CD4-positive, alpha-beta memory T cell (primary cell): ENCODE measurements at regions of chr2 and their contacts with region 1.

Region 1: GRCh38 chr2:147843864-147844696 is 749 bp upstream of the ACVR2A start:
- DNase-seq: peak; percentile 87 to 91 (median 88)
- H3K4me3 ChIP-seq: peak overlapping the region; percentile 49 to 74
- H3K4me3 Mint-ChIP-seq: peak overlapping the region; percentile 93 to 99 (median 97)
- H3K27ac ChIP-seq: peak overlapping the region; percentile 51
- H3K27ac Mint-ChIP-seq: peak overlapping the region; percentile 78 to 99 (median 87)
- H3K4me1 ChIP-seq: peaks cover 38% of the 10 kb centered on the region
- H3K4me1 Mint-ChIP-seq: peaks cover 23 to 50% (median 36%) of the 10 kb centered on the region in 4 donors
- H3K27me3 ChIP-seq: no peaks in the 10 kb centered on the region
- H3K27me3 Mint-ChIP-seq: peaks cover 3 to 5% of the 10 kb centered on the region in 2 donors

Region 2: GRCh38 chr2:147297820-147298219 is 546.3 kb before region 1 on chr2:
- CTCF ChIA-PET with region 1: no interaction called
- POLR2A ChIA-PET with region 1: interaction called, 15 read pairs
- intact Hi-C with region 1: loop called (anchors 2 kb)
- DNase-seq: peak; percentile 60 to 67 (median 64)
- H3K4me3 ChIP-seq: no peak overlapping the region
- H3K4me3 Mint-ChIP-seq: peak overlapping the region in 7 of 8 donors; percentile 27 to 79 (median 64)
- H3K27ac ChIP-seq: peak overlapping the region; percentile 25
- H3K27ac Mint-ChIP-seq: peak overlapping the region; percentile 79 to 97 (median 89)
- H3K4me1 ChIP-seq: peaks cover 72% of the 10 kb centered on the region
- H3K4me1 Mint-ChIP-seq: peaks cover 56 to 83% (median 65%) of the 10 kb centered on the region in 4 donors
- H3K27me3 ChIP-seq: no peaks in the 10 kb centered on the region
- H3K27me3 Mint-ChIP-seq: no peaks in the 10 kb centered on the region

Region 3: DNA sequence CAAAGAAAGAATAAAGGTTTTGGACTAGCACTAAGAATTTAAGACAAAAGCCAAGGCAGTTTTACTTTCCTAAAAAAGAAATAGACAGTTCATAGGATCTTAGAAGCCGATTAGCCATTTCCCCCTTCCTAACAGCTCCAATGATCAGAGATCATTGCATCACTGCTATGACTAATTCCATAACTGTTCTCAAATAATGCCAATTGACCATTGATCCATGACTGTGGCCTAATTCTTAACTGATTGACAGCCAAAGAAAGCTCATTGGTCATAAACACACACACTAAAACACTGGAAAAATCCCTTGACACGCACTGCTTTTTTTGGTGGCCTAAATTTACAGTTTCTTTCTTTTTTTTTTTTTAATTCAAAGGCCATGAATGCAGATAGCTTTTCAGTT is 344.3 kb before region 1 on chr2:
- CTCF ChIA-PET with region 1: no interaction called
- POLR2A ChIA-PET with region 1: no interaction called
- intact Hi-C with region 1: loop called (anchors 10 kb)
- DNase-seq: no peak
- H3K4me3 ChIP-seq: no peak overlapping the region
- H3K4me3 Mint-ChIP-seq: peak overlapping the region in 7 of 8 donors; percentile 36 to 87 (median 70)
- H3K27ac ChIP-seq: peak overlapping the region; percentile 5
- H3K27ac Mint-ChIP-seq: peak overlapping the region; percentile 2 to 78 (median 61)
- H3K4me1 ChIP-seq: peaks cover 52% of the 10 kb centered on the region
- H3K4me1 Mint-ChIP-seq: peaks cover 48 to 77% (median 63%) of the 10 kb centered on the region in 4 donors
- H3K27me3 ChIP-seq: no peaks in the 10 kb centered on the region
- H3K27me3 Mint-ChIP-seq: no peaks in the 10 kb centered on the region

Region 4: GRCh38 chr2:147663153-147663961 is 180.7 kb before region 1 on chr2:
- CTCF ChIA-PET with region 1: interaction called, 3 read pairs
- POLR2A ChIA-PET with region 1: interaction called, 34 read pairs
- intact Hi-C with region 1: loop called (anchors 1 kb)
- DNase-seq: peak; percentile 42 to 78 (median 66)
- H3K4me3 ChIP-seq: peak overlapping the region; percentile 3 to 54
- H3K4me3 Mint-ChIP-seq: peak overlapping the region; percentile 76 to 90 (median 85)
- H3K27ac ChIP-seq: peak overlapping the region; percentile 57
- H3K27ac Mint-ChIP-seq: peak overlapping the region; percentile 81 to 96 (median 93)
- H3K4me1 ChIP-seq: peaks cover 21% of the 10 kb centered on the region
- H3K4me1 Mint-ChIP-seq: peaks cover 34 to 56% (median 45%) of the 10 kb centered on the region in 4 donors
- H3K27me3 ChIP-seq: no peaks in the 10 kb centered on the region
- H3K27me3 Mint-ChIP-seq: no peaks in the 10 kb centered on the region

Region 5: GRCh38 chr2:147910990-147911473 is 67.0 kb after region 1 on chr2:
- CTCF ChIA-PET with region 1: interaction called, 3 read pairs
- POLR2A ChIA-PET with region 1: no interaction called
- intact Hi-C with region 1: loop called (anchors 2 kb)
- DNase-seq: peak; percentile 48 to 65 (median 57)
- H3K4me3 ChIP-seq: no peak overlapping the region
- H3K4me3 Mint-ChIP-seq: no peak overlapping the region
- H3K27ac ChIP-seq: no peak overlapping the region
- H3K27ac Mint-ChIP-seq: peak overlapping the region in 4 of 7 donors; percentile 17 to 52 (median 36)
- H3K4me1 ChIP-seq: peaks cover 12% of the 10 kb centered on the region
- H3K4me1 Mint-ChIP-seq: peaks cover 11 to 18% (median 14%) of the 10 kb centered on the region in 4 donors
- H3K27me3 ChIP-seq: no peaks in the 10 kb centered on the region
- H3K27me3 Mint-ChIP-seq: no peaks in the 10 kb centered on the region

Region 6: GRCh38 chr2:148644883-148645538 is 800.9 kb after region 1 on chr2:
- CTCF ChIA-PET with region 1: no interaction called
- POLR2A ChIA-PET with region 1: no interaction called
- intact Hi-C with region 1: loop called (anchors 1 kb)
- DNase-seq: peak; percentile 93 to 98 (median 95)
- H3K4me3 ChIP-seq: peak overlapping the region; percentile 88 to 99
- H3K4me3 Mint-ChIP-seq: peak overlapping the region; percentile 91 to 99 (median 95)
- H3K27ac ChIP-seq: peak overlapping the region; percentile 87
- H3K27ac Mint-ChIP-seq: peak overlapping the region; percentile 93 to 99 (median 97)
- H3K4me1 ChIP-seq: peaks cover 48% of the 10 kb centered on the region
- H3K4me1 Mint-ChIP-seq: peaks cover 24 to 45% (median 36%) of the 10 kb centered on the region in 4 donors
- H3K27me3 ChIP-seq: no peaks in the 10 kb centered on the region
- H3K27me3 Mint-ChIP-seq: no peaks in the 10 kb centered on the region